Heart right ventricle (tissue), 16 donors: ENCODE measurements at regions of chr10 and their contacts with region 1.

Region 1: GRCh38 chr10:75401569-75402485 is at the start of gene ZNF503:
- DNase-seq: peak; percentile 95 to 97
- ATAC-seq: peak; percentile 78 to 93 (median 90)
- H3K4me3 ChIP-seq: peak within 1 kb of the TSS; percentile 85 to 98 (median 90)
- H3K27ac ChIP-seq: peak within 1 kb of the TSS; percentile 85 to 99 (median 94)
- H3K4me1 ChIP-seq: peaks cover 5 to 62% (median 44%) of the 10 kb centered on the region in 9 donors
- H3K27me3 ChIP-seq: peaks cover 0 to 64% (median 34%) of the 10 kb centered on the region in 7 donors
- CTCF ChIP-seq: peak in 5 of 9 donors; percentile 9 to 42 (median 29)
- total RNA-seq, gene ZNF503: 2.5 to 9.7 (median 4.1) TPM

Region 2: GRCh38 chr10:75294866-75295701 is 106.7 kb before region 1 on chr10:
- intact Hi-C with region 1: loop called in 4 of 10 experiments (anchors 5 to 10 kb)
- DNase-seq: peak; percentile 76 to 82
- ATAC-seq: peak; percentile 75 to 91 (median 85)
- H3K4me3 ChIP-seq: peak overlapping the region; percentile 37 to 72 (median 63)
- H3K27ac ChIP-seq: peak overlapping the region; percentile 85 to 96 (median 93)
- H3K4me1 ChIP-seq: peaks cover 3 to 27% (median 22%) of the 10 kb centered on the region in 9 donors
- H3K27me3 ChIP-seq: peaks cover 0 to 24% (median 0%) of the 10 kb centered on the region in 7 donors
- CTCF ChIP-seq: peak in 7 of 9 donors; percentile 16 to 56 (median 28)

Region 3: GRCh38 chr10:75651417-75651816 is 249.6 kb after region 1 on chr10:
- intact Hi-C with region 1: loop called in 4 of 10 experiments (anchors 5 to 10 kb)
- DNase-seq: no peak
- ATAC-seq: peak in 1 of 8 donors; percentile 21
- H3K4me3 ChIP-seq: no peak overlapping the region
- H3K27ac ChIP-seq: no peak overlapping the region
- H3K4me1 ChIP-seq: peaks cover 3 to 54% (median 32%) of the 10 kb centered on the region in 9 donors
- H3K27me3 ChIP-seq: no peaks in the 10 kb centered on the region
- CTCF ChIP-seq: peak in 2 of 9 donors; percentile 10 to 13

Region 4: DNA sequence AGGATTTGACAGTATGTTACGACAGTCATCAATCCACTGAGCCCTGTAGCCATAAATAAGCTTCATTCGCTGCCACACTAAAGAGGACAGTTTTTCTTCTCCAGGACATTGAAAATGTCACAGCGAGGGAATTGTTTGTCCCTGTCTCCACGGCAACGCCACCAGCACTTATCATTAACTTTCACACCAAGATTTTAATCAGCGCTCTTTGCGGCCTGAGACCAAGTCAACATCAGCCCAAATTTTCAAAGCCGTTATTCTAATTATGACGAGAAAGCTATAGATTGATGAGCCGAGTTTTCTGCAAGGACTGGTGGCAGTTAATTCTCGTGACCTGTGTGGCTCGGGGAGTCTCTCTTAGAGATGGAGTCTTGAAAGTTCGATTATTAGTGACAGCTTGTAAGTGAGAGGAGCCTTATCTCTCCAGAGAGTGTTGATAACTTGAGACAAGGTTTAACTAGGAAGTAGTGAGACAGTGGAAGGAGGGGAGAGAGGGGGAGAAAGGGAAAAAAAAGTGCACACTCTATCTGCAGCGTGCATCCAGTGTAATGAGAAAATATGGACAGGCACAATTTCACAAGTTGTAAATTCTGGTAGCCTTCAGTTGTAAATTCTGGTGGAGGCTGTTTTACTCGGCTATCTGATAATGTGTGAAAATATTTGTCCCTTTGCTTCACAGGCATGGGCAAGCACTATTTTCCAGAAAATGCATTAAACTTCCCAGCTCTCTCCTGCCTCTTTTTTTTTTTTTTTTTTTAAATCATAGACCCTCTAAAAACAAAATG is 502.9 kb after region 1 on chr10:
- intact Hi-C with region 1: loop called in 6 of 10 experiments (anchors 2 to 10 kb)
- DNase-seq: no peak
- ATAC-seq: peak in 2 of 8 donors; percentile 27 to 58
- H3K4me3 ChIP-seq: peak overlapping the region in 4 of 10 donors; percentile 2 to 30 (median 23)
- H3K27ac ChIP-seq: no peak overlapping the region
- H3K4me1 ChIP-seq: peaks cover 0 to 11% (median 0%) of the 10 kb centered on the region in 9 donors
- H3K27me3 ChIP-seq: peaks cover 0 to 2% (median 0%) of the 10 kb centered on the region in 7 donors
- CTCF ChIP-seq: no peak

Region 5: GRCh38 chr10:76303682-76304316 is 902.0 kb after region 1 on chr10:
- intact Hi-C with region 1: loop called in 7 of 10 experiments (anchors 2 to 10 kb)
- DNase-seq: peak; percentile 59 to 78
- ATAC-seq: peak; percentile 90 to 97 (median 94)
- H3K4me3 ChIP-seq: no peak overlapping the region
- H3K27ac ChIP-seq: no peak overlapping the region
- H3K4me1 ChIP-seq: peaks cover 0 to 34% (median 15%) of the 10 kb centered on the region in 9 donors
- H3K27me3 ChIP-seq: no peaks in the 10 kb centered on the region
- CTCF ChIP-seq: peak; percentile 20 to 72 (median 58)

Region 6: GRCh38 chr10:76558586-76558985 is 1156.8 kb after region 1 on chr10:
- intact Hi-C with region 1: loop called in 2 of 10 experiments (anchors 5 to 10 kb)
- DNase-seq: no peak
- ATAC-seq: no peak
- H3K4me3 ChIP-seq: no peak overlapping the region
- H3K27ac ChIP-seq: no peak overlapping the region
- H3K4me1 ChIP-seq: peaks cover 0 to 32% (median 10%) of the 10 kb centered on the region in 9 donors
- H3K27me3 ChIP-seq: no peaks in the 10 kb centered on the region
- CTCF ChIP-seq: no peak